Heart left ventricle (tissue), 16 donors: ENCODE measurements at regions of chr7 and their contacts with region 1.

Region 1: DNA sequence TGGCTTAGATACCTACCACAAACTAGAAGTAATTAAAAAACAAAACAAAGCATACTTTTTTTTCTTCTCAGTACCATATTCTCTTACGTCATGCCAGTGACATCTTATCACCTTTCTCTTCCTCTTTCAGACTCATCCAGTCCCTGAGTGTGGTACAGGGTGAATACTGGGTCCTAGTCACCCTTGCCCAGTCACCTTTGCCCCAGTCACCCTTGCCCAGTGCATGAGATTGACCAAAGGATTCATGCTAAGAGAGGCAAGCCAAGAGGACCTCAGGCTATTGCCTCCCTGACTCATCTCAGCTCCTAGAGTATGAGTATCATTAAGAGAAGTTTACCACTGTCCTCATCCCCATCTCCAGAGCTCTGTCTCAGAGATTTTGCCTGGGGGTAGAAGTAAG is 10.0 kb upstream of the TSPAN12 start:
- DNase-seq: no peak
- ATAC-seq: no peak
- H3K4me3 ChIP-seq: no peak overlapping the region
- H3K27ac ChIP-seq: no peak overlapping the region
- H3K4me1 ChIP-seq: peaks cover 0 to 23% (median 5%) of the 10 kb centered on the region in 12 donors
- H3K27me3 ChIP-seq: no peaks in the 10 kb centered on the region
- CTCF ChIP-seq: no peak
- POLR2A ChIP-seq: no peak

Region 2: GRCh38 chr7:120583899-120584586 is 283.9 kb before region 1 on chr7:
- intact Hi-C with region 1: no loop called
- DNase-seq: no peak
- ATAC-seq: no peak
- H3K4me3 ChIP-seq: no peak overlapping the region
- H3K27ac ChIP-seq: no peak overlapping the region
- H3K4me1 ChIP-seq: no peaks in the 10 kb centered on the region
- H3K27me3 ChIP-seq: no peaks in the 10 kb centered on the region
- CTCF ChIP-seq: no peak
- POLR2A ChIP-seq: no peak

Region 3: DNA sequence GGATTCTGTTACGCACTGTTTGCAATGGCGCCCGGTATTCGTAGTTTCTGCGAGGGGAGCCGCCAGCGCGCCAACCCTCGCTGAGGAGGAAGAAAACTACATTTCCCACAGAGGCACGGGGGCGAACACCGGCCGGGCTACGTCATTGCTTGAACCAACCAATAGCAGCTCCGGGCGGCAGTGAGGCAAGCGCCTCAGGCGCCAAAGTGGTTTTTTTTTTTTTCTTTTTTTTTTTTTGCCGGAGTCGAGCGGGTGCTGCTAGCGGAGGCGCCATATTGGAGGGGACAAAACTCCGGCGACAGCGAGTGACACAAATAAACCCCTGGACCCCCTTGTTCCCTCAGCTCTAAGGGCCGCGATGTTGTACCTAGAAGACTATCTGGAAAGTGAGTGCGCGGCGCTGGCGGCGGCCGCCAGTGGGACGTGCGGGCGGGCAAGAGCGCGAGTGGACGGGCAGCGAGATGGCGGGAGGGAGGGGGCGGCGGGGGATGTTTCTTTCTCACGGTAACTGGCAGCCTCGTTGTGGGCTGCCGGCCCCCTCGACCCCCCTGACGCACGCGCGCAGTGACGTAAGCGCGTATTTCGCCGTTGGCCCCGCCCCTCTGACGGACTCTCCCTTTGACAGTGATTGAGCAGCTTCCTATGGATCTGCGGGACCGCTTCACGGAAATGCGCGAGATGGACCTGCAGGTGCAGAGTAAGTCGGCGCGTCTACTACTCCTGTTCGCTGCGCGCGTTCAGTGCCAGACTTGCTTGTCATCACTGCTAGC is 82.8 kb after region 1 on chr7 and contains the start of gene ING3:
- intact Hi-C with region 1: loop called in 2 of 10 experiments (anchors 5 kb)
- DNase-seq: peak; percentile 97 to 98 (median 98)
- ATAC-seq: peak; percentile 98 to 99 (median 99)
- H3K4me3 ChIP-seq: peak within 1 kb of the TSS; percentile 53 to 79 (median 72)
- H3K27ac ChIP-seq: peak within 1 kb of the TSS; percentile 65 to 98 (median 96)
- H3K4me1 ChIP-seq: peaks cover 6 to 27% (median 20%) of the 10 kb centered on the region in 12 donors
- H3K27me3 ChIP-seq: no peaks in the 10 kb centered on the region
- CTCF ChIP-seq: no peak
- POLR2A ChIP-seq: peak in 1 of 2 donors; percentile 45
- total RNA-seq, gene ING3: 9.3 to 16.0 (median 13.3) TPM